Right ventricle myocardium superior (tissue), 1 donor: ENCODE measurements at regions of chr21 and their contacts with region 1.

Region 1: GRCh38 chr21:43921979-43922945 is 57.2 kb downstream of the AGPAT3 start:
- DNase-seq: no peak
- ATAC-seq: no peak

Region 2: DNA sequence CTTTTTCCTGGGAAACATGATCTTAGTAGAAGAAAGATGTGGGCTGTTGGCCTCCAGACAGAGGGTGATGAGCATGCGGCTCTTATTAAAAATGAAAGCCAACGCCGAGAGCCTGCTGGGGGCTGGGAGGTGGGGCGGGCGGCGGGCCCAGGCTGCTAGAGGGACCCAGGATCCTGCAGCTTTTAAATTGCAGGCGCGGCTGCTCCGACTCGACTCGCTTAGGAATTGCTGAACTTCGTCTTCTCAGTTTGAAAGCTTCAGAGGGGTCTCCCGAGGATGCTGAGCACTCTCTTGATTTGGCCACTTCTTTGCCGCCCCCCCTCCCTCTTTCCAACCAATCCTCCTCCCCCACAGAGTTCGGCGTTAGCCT is 56.0 kb before region 1 on chr21:
- intact Hi-C with region 1: loop called (anchors 10 kb)
- DNase-seq: peak; percentile 70
- ATAC-seq: peak; percentile 55

Region 3: GRCh38 chr21:44338971-44339910 is 417.0 kb after region 1 on chr21 and contains the start of gene CFAP410:
- intact Hi-C with region 1: no loop called
- DNase-seq: peak; percentile 96
- ATAC-seq: peak; percentile 95
- total RNA-seq, gene CFAP410: 13.9 TPM

Region 4: DNA sequence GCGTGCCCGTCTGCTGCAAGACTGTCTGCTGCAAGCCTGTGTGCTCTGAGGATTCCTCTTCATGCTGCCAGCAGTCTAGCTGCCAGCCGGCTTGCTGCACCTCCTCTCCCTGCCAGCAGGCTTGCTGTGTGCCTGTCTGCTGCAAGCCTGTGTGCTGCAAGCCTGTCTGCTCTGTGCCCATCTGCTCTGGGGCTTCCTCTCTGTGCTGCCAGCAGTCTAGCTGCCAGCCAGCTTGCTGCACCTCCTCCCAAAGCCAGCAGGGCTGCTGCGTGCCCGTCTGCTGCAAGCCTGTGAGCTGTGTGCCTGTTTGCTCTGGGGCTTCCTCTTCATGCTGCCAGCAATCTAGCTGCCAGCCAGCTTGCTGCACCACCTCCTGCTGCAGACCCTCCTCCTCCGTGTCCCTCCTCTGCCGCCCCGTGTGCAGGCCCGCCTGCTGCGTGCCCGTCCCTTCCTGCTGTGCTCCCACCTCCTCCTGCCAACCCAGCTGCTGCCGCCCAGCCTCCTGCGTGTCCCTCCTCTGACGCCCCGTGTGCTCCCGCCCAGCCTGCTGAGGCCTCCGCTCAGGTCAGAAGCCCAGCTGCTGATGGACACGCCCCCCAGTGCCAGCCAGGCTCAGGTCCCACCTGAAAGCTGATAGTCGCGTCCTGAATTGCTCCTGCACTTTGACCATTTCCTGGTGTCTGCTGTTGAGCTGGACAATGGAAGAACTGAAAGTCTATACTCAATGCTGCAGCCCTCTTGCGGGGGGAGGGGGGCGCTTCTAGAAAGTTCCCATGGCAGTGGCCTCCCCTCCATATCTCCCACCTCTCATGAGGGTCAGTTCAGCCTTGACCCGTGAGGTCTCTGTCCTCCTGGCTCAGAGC is 652.4 kb after region 1 on chr21:
- intact Hi-C with region 1: no loop called
- DNase-seq: no peak
- ATAC-seq: no peak